Activated CD4-positive, alpha-beta T cell treated with anti-CD3 and anti-CD28 coated beads for 36 hours (primary cell): ENCODE measurements at regions of chr9 and their contacts with region 1.

Region 1: DNA sequence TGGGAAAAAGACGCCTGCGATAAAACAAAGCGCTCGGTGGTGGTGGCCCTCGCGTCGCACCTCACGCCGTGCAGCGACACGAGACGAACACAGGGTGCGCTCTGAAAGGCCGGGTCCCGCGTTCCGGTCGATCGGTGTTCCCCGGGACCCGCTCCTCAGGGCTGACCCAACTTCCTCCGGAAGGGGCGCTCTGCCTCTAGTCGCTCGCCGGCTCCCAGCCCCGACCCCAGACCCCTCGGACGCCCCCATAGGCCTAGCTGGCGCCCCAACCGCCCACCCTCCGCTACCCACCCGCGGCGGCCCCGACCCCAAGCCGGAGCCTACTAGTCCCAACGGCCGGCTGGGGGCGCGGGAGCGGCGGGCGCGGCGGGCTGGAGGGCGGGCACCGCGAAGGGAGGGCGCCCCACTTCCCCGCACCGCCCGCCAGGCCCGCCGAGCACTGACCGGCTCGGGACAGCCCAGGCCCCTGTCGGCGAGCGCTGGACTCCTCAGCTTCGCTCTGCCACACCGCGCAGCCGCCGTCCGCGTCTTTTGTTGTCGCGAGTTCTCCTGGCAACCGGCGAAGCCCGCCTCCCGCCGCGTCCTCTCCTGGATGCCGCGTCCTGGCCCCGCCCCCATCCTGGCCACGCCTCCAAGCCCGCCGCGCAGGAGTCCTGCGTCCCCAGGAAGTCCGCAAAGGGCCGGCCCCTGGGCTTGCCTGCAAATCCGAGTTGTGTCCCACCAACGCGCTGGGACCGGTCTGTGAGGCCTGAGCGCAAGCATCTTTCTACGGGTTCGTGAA is at the start of gene KIF27:
- DNase-seq: peak; percentile 98
- ATAC-seq: peak; percentile 87
- H3K4me3 Mint-ChIP-seq: peak within 1 kb of the TSS; percentile 83
- H3K27ac Mint-ChIP-seq: peak within 1 kb of the TSS; percentile 88
- H3K4me1 Mint-ChIP-seq: peaks cover 12% of the 10 kb centered on the region
- H3K27me3 Mint-ChIP-seq: no peaks in the 10 kb centered on the region
- total RNA-seq, gene KIF27: 3.2 to 3.4 TPM

Region 2: DNA sequence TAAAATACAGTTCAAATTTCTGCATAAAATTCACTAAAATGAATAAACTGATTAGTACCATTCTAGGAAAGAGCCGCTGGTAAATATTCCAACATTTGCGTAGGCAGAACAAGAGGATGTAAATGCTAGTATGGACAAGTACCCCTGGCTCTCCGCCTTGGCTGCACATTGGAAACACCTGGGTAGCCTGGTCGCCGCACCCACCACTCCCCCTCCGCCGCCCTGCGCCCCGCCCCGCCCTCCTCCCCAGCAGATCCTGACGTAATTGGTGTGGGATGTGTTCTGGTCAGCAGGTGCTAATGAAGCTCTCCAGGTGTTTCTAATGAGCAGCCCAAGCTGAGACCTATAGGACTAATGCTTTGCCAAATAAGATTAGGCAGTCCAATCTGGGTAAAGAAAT is 608.6 kb before region 1 on chr9:
- CTCF ChIA-PET with region 1: no interaction called
- POLR2A ChIA-PET with region 1: no interaction called
- intact Hi-C with region 1: no loop called
- DNase-seq: no peak
- ATAC-seq: no peak
- H3K4me3 Mint-ChIP-seq: no peak overlapping the region
- H3K27ac Mint-ChIP-seq: no peak overlapping the region
- H3K4me1 Mint-ChIP-seq: no peaks in the 10 kb centered on the region
- H3K27me3 Mint-ChIP-seq: no peaks in the 10 kb centered on the region

Region 3: GRCh38 chr9:83622939-83623678 is 298.0 kb before region 1 on chr9 and contains the start of gene IDNK:
- CTCF ChIA-PET with region 1: interaction called, 3 read pairs
- POLR2A ChIA-PET with region 1: interaction called, 4 read pairs
- intact Hi-C with region 1: loop called (anchors 1 to 2 kb)
- DNase-seq: peak; percentile 77
- ATAC-seq: peak; percentile 89
- H3K4me3 Mint-ChIP-seq: peak within 1 kb of the TSS; percentile 80
- H3K27ac Mint-ChIP-seq: peak within 1 kb of the TSS; percentile 98
- H3K4me1 Mint-ChIP-seq: peaks cover 23% of the 10 kb centered on the region
- H3K27me3 Mint-ChIP-seq: no peaks in the 10 kb centered on the region
- total RNA-seq, gene IDNK: 4.6 to 4.7 TPM

Region 4: GRCh38 chr9:83707768-83708514 is 213.2 kb before region 1 on chr9 and contains the start of gene UBQLN1:
- CTCF ChIA-PET with region 1: no interaction called
- POLR2A ChIA-PET with region 1: interaction called, 8 read pairs
- intact Hi-C with region 1: loop called (anchors 1 kb)
- DNase-seq: peak; percentile 94
- ATAC-seq: peak; percentile 80
- H3K4me3 Mint-ChIP-seq: peak within 1 kb of the TSS; percentile 80
- H3K27ac Mint-ChIP-seq: peak within 1 kb of the TSS; percentile 100
- H3K4me1 Mint-ChIP-seq: peaks cover 40% of the 10 kb centered on the region
- H3K27me3 Mint-ChIP-seq: no peaks in the 10 kb centered on the region
- total RNA-seq, gene UBQLN1: 88.3 to 116 TPM

Region 5: GRCh38 chr9:83722686-83723085 is 198.4 kb before region 1 on chr9:
- CTCF ChIA-PET with region 1: no interaction called
- POLR2A ChIA-PET with region 1: no interaction called
- intact Hi-C with region 1: no loop called
- DNase-seq: no peak
- ATAC-seq: no peak
- H3K4me3 Mint-ChIP-seq: no peak overlapping the region
- H3K27ac Mint-ChIP-seq: no peak overlapping the region
- H3K4me1 Mint-ChIP-seq: no peaks in the 10 kb centered on the region
- H3K27me3 Mint-ChIP-seq: no peaks in the 10 kb centered on the region

Region 6: GRCh38 chr9:83956434-83957247 is 35.5 kb after region 1 on chr9:
- CTCF ChIA-PET with region 1: no interaction called
- POLR2A ChIA-PET with region 1: no interaction called
- intact Hi-C with region 1: loop called in 1 of 2 experiments (anchors 1 kb)
- DNase-seq: peak; percentile 81
- ATAC-seq: peak; percentile 80
- H3K4me3 Mint-ChIP-seq: peak overlapping the region; percentile 96
- H3K27ac Mint-ChIP-seq: peak overlapping the region; percentile 97
- H3K4me1 Mint-ChIP-seq: peaks cover 20% of the 10 kb centered on the region
- H3K27me3 Mint-ChIP-seq: no peaks in the 10 kb centered on the region

Region 7: GRCh38 chr9:84261082-84261746 is 340.1 kb after region 1 on chr9:
- CTCF ChIA-PET with region 1: interaction called, 5 read pairs
- POLR2A ChIA-PET with region 1: no interaction called
- intact Hi-C with region 1: loop called in 1 of 2 experiments (anchors 5 kb)
- DNase-seq: peak; percentile 77
- ATAC-seq: peak; percentile 82
- H3K4me3 Mint-ChIP-seq: no peak overlapping the region
- H3K27ac Mint-ChIP-seq: no peak overlapping the region
- H3K4me1 Mint-ChIP-seq: peaks cover 6% of the 10 kb centered on the region
- H3K27me3 Mint-ChIP-seq: peaks cover 8% of the 10 kb centered on the region

Region 8: GRCh38 chr9:84296146-84296843 is 375.2 kb after region 1 on chr9:
- CTCF ChIA-PET with region 1: no interaction called
- POLR2A ChIA-PET with region 1: interaction called, 3 read pairs
- intact Hi-C with region 1: loop called (anchors 1 kb)
- DNase-seq: peak; percentile 79
- ATAC-seq: peak; percentile 82
- H3K4me3 Mint-ChIP-seq: peak overlapping the region; percentile 46
- H3K27ac Mint-ChIP-seq: peak overlapping the region; percentile 98
- H3K4me1 Mint-ChIP-seq: peaks cover 60% of the 10 kb centered on the region
- H3K27me3 Mint-ChIP-seq: no peaks in the 10 kb centered on the region

Region 9: DNA sequence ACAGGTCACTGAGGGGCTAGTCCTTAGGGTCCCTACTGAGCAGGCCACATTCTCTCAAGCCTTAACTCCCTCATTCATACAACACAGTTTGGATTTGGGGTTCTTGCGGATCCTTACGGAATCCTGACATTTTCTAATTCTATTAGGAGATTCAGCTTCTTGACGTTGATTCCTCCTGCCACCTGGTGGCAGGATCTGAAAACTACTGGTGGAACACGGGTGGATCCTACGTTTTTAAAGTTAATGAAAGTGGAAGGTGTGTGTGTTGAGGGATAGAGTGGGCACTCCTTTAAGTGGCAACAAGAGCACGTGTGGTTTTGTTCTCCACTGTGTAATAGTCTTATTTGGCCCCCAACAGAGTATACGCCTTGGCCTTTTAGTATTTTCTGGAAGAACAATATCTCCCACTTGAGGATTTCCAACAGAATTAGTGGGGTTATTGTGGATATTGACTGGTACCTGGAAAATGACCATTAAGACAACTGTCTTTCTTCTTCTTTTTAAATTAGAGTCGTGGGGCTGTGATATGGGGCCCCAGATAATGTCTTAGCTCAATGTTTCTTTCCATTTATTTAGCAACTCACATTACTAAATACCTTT is 394.3 kb after region 1 on chr9:
- CTCF ChIA-PET with region 1: interaction called, 3 read pairs
- POLR2A ChIA-PET with region 1: no interaction called
- intact Hi-C with region 1: loop called in 1 of 2 experiments (anchors 5 kb)
- DNase-seq: peak; percentile 75
- ATAC-seq: peak; percentile 80
- H3K4me3 Mint-ChIP-seq: no peak overlapping the region
- H3K27ac Mint-ChIP-seq: no peak overlapping the region
- H3K4me1 Mint-ChIP-seq: peaks cover 2% of the 10 kb centered on the region
- H3K27me3 Mint-ChIP-seq: no peaks in the 10 kb centered on the region